ENCODE measurements at regions of chr16 and their contacts with region 1.

Region 1: GRCh38 chr16:27600381-27600780 is 50.4 kb downstream of the KATNIP start:
- DNase-seq: no peak
- ATAC-seq: no peak
- H3K4me3 ChIP-seq: no peak overlapping the region
- H3K27ac ChIP-seq: no peak overlapping the region
- H3K4me1 ChIP-seq: peaks cover 0 to 8% (median 0%) of the 10 kb centered on the region in 3 donors
- H3K27me3 ChIP-seq: no peaks in the 10 kb centered on the region
- CTCF ChIP-seq: no peak

Region 2: DNA sequence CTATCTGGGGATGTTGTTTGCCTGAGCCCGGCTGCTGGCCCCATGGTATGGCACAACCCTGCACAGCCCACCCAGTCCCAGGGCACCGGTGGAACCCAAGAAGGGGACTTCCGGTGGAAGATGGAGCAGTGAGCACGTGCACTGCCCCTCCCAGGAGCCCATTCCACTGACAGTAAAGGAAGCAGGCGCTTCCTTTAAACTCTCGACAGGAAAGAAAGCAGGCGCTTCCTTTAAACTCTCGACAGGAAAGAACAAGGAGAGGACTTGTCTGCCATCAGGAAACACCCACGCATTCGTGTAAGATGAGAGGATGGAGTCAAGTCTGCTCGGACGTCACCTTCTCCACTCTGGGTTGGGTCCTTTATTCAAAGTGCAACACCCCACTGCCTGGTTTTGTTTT is 144.7 kb before region 1 on chr16:
- intact Hi-C with region 1: no loop called
- DNase-seq: no peak
- ATAC-seq: no peak
- H3K4me3 ChIP-seq: no peak overlapping the region
- H3K27ac ChIP-seq: no peak overlapping the region
- H3K4me1 ChIP-seq: no peaks in the 10 kb centered on the region
- H3K27me3 ChIP-seq: no peaks in the 10 kb centered on the region
- CTCF ChIP-seq: no peak

Region 3: GRCh38 chr16:28069971-28070794 is 469.8 kb after region 1 on chr16:
- intact Hi-C with region 1: loop called in 1 of 3 experiments (anchors 10 kb)
- DNase-seq: no peak
- ATAC-seq: peak in 1 of 4 donors; percentile 11
- H3K4me3 ChIP-seq: no peak overlapping the region
- H3K27ac ChIP-seq: no peak overlapping the region
- H3K4me1 ChIP-seq: no peaks in the 10 kb centered on the region
- H3K27me3 ChIP-seq: no peaks in the 10 kb centered on the region
- CTCF ChIP-seq: no peak